Endothelial cell of umbilical vein (primary cell): ENCODE measurements at regions of chr5 and their contacts with region 1.

Region 1: DNA sequence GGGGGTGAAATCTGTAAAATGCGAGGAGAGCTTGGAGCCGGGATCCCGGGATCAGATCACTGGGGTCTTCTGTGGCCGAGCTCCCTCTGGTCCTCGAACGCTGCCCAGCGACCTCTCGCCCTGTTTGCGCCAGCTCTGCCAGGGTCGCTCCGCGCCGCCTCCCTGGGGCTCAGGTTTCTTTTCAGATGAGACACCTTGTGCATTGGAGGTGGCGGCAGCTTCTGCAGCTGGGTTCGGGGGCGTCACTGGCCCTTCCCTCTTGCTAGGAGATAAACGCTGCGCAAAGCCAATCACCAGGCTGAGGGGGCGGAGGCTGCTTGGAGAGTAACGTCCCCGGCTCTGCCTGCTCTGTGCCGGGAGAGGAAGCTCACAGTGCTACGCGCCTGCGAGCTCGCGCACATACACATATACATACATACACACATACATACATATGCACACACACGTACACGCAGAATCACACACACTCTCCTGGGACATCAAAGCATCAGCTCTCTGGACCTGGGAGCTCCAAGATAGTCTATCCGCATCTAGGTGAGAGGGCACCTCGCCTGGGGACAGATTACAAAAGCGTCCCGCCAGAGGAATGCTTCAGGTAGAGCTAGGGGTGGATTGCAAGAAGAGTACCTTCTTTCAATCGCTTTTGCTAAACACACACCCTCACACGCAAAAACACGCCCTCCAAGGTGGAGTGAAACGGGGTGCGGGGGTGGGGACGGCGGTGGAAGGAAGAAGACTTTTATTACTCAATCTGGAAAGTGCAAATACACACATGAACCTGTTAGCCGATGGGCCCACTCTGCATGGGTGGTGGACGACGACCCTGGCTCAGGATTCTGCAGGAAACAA is at the start of gene ST8SIA4:
- DNase-seq: peak; percentile 91
- H3K4me3 ChIP-seq: peak within 1 kb of the TSS; percentile 55 to 98 (median 97)
- H3K27ac ChIP-seq: peak within 1 kb of the TSS; percentile 80
- H3K4me1 ChIP-seq: peaks cover 19% of the 10 kb centered on the region
- H3K27me3 ChIP-seq: no peaks in the 10 kb centered on the region
- CTCF ChIP-seq: no peak
- POLR2A ChIP-seq: peak; percentile 57
- total RNA-seq, gene ST8SIA4: 25.0 and 28.3 TPM in 2 replicates

Region 2: DNA sequence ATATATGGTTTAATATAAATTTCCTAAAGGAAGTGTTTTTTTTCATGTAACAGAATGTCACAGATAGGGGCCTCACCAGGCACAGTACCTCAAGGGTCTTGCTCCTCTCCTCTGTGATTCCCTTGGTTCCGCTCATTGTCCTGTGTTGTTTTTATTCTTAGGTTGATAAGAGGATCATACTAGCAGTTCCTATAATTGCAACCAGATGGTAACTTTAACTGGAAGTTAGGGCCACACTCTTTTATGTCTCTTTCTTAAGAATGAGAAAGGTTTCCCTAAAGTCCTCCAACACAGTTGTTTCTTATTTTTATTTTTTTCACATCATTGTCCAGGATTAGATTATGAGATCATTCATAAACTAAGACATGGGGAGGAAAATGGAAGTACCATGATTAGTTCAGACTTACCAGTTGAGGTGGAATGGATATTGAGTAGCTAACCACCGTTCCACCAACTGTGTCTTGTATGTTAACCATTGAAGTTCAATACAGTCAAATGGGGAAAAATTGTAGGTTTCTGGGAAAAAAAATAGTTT is 327.0 kb before region 1 on chr5:
- CTCF ChIA-PET with region 1: interaction called, 3 read pairs
- POLR2A ChIA-PET with region 1: no interaction called
- dilution Hi-C with region 1: no loop called
- intact Hi-C with region 1: loop called (anchors 1 kb)
- DNase-seq: peak; percentile 83
- H3K4me3 ChIP-seq: peak overlapping the region in 1 of 3 experiments; percentile 32
- H3K27ac ChIP-seq: peak overlapping the region; percentile 92
- H3K4me1 ChIP-seq: peaks cover 24% of the 10 kb centered on the region
- H3K27me3 ChIP-seq: no peaks in the 10 kb centered on the region
- CTCF ChIP-seq: no peak
- POLR2A ChIP-seq: no peak

Region 3: GRCh38 chr5:100697970-100698369 is 205.3 kb before region 1 on chr5:
- CTCF ChIA-PET with region 1: interaction called, 27 read pairs
- POLR2A ChIA-PET with region 1: no interaction called
- dilution Hi-C with region 1: no loop called
- intact Hi-C with region 1: no loop called
- DNase-seq: no peak
- H3K4me3 ChIP-seq: no peak overlapping the region
- H3K27ac ChIP-seq: no peak overlapping the region
- H3K4me1 ChIP-seq: no peaks in the 10 kb centered on the region
- H3K27me3 ChIP-seq: no peaks in the 10 kb centered on the region
- CTCF ChIP-seq: peak in 1 of 2 donors; percentile 10
- POLR2A ChIP-seq: no peak

Region 4: GRCh38 chr5:100722657-100723056 is 180.6 kb before region 1 on chr5:
- CTCF ChIA-PET with region 1: no interaction called
- POLR2A ChIA-PET with region 1: no interaction called
- dilution Hi-C with region 1: no loop called
- intact Hi-C with region 1: no loop called
- DNase-seq: no peak
- H3K4me3 ChIP-seq: no peak overlapping the region
- H3K27ac ChIP-seq: no peak overlapping the region
- H3K4me1 ChIP-seq: no peaks in the 10 kb centered on the region
- H3K27me3 ChIP-seq: no peaks in the 10 kb centered on the region
- CTCF ChIP-seq: no peak
- POLR2A ChIP-seq: no peak

Region 5: DNA sequence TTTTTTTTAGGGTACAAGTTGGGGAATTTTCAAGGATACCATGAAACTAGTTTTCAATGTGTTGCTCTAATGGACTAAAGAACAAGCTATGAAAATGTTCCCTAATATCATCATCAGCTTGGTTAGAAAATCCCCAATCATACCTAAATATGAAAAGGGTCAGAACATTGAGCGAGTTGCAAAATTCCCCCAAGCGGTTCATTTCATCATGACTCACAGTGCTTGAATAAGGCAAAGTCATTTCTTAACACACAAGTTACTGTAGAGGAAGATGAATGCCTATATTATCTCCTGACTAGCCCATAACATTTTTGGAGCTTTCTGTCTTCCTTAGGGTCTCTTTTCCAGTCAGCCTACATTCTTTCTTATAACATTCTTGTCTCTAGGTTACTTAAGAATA is 62.9 kb before region 1 on chr5:
- CTCF ChIA-PET with region 1: interaction called, 20 read pairs
- POLR2A ChIA-PET with region 1: interaction called, 12 read pairs
- dilution Hi-C with region 1: no loop called
- intact Hi-C with region 1: loop called (anchors 1 kb)
- DNase-seq: peak; percentile 47
- H3K4me3 ChIP-seq: no peak overlapping the region
- H3K27ac ChIP-seq: peak overlapping the region; percentile 89
- H3K4me1 ChIP-seq: peaks cover 47% of the 10 kb centered on the region
- H3K27me3 ChIP-seq: no peaks in the 10 kb centered on the region
- CTCF ChIP-seq: no peak
- POLR2A ChIP-seq: no peak

Region 6: DNA sequence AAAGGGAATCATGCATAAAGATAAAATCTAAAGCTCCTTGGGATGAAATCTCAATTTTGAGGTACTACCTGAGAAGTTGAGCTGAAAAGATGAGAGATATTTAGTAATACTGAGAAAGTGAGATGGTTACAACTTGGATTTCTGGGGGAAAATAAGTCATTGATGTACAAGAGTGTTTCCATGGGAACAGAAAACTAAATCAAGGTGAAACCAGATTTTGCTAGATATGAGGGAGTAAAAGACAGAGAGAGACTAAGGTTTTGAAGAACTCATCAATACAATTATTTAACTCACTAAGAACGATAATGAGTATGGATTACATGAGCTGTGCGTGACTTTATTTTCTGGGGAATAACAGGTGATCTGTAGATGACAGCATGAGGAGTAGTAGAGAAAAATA is 10.0 kb after region 1 on chr5:
- CTCF ChIA-PET with region 1: interaction called, 10 read pairs
- POLR2A ChIA-PET with region 1: no interaction called
- dilution Hi-C with region 1: no loop called
- intact Hi-C with region 1: no loop called
- DNase-seq: no peak
- H3K4me3 ChIP-seq: no peak overlapping the region
- H3K27ac ChIP-seq: no peak overlapping the region
- H3K4me1 ChIP-seq: no peaks in the 10 kb centered on the region
- H3K27me3 ChIP-seq: no peaks in the 10 kb centered on the region
- CTCF ChIP-seq: no peak
- POLR2A ChIP-seq: no peak